Activated CD4-positive, alpha-beta T cell treated with anti-CD3 and anti-CD28 coated beads for 36 hours (primary cell): ENCODE measurements at regions of chr7 and their contacts with region 1.

Region 1: DNA sequence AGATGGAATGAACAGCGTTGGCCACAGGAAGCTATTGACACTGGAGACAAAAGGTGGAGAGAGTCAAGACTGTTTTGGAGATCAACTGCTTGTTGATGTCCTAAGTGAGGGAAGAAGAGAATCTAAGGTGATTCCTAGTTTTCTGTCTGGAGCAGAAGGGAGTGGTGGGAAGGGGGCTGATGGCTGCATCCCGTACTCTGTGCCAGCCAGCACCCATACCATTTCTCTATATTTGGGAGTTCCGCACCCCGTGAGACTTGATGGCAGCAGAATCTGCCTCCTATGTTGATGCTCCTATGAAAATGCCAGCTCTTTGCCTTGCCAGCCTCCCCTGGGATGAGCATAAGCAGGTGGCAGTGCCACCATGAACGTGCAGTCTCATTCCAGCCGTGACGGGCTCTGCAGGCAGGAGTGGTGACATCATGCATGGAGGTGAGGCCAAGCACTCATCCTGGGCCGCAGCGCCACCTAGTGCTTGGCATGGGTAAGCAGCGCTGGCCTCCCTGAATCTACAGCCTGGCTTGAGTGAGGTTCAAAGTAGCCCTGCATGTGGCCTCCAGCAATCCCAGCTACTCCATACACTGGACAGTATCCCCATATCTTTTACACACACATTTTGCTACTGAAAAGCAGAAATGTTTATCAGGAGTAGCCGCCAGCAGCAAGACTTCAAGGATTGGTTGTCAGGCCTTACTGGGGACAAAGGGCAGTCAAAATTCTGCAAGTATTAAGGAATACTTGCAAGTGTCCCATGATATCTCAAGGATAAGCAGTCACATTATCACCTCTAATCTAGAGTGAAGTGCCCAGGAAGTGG is 43.0 kb downstream of the PODXL start:
- DNase-seq: peak; percentile 92
- ATAC-seq: peak; percentile 99
- H3K4me3 Mint-ChIP-seq: no peak overlapping the region
- H3K27ac Mint-ChIP-seq: no peak overlapping the region
- H3K4me1 Mint-ChIP-seq: peaks cover 6% of the 10 kb centered on the region
- H3K27me3 Mint-ChIP-seq: peaks cover 9% of the 10 kb centered on the region

Region 2: DNA sequence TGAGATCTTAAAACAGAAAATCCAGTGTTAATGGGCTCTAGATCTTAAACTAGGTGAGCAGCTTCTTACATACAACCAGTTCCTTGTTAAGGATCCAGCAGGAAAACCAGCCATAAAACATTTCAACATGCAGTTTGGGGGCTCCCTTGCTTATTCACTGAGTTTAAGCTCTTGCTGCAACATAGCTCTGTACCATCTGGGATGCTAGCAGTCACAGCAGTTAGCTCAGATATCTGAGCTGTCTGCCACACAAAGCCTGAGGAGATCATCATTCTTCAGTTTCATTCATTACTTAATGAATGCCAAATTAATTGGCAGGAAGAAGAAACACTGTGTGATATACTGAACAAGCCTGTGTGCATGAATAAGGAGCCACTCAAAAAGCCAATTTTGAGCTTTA is 19.9 kb before region 1 on chr7:
- CTCF ChIA-PET with region 1: interaction called, 14 read pairs
- POLR2A ChIA-PET with region 1: no interaction called
- intact Hi-C with region 1: no loop called
- DNase-seq: no peak
- ATAC-seq: no peak
- H3K4me3 Mint-ChIP-seq: no peak overlapping the region
- H3K27ac Mint-ChIP-seq: no peak overlapping the region
- H3K4me1 Mint-ChIP-seq: no peaks in the 10 kb centered on the region
- H3K27me3 Mint-ChIP-seq: no peaks in the 10 kb centered on the region

Region 3: DNA sequence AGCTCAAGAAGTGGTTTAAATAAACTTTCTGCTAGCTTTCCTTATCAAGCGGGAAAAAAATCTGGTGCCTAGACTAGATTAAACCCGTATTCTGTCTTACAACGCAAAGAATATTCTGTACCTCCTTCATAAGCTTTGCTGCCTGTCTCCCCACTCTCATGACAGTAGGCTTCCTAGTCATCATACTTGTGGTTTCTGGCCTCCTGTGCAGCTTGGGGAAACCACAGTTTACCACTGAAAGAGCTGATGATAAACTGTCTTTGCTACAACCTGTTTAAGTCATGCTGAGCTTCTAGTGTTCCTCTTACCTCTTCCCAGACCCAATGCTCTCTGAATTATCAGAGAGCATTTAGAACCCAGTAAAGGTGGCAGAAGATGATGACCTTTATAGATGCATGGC is 12.0 kb before region 1 on chr7:
- CTCF ChIA-PET with region 1: interaction called, 22 read pairs
- POLR2A ChIA-PET with region 1: no interaction called
- intact Hi-C with region 1: no loop called
- DNase-seq: peak; percentile 74
- ATAC-seq: peak; percentile 93
- H3K4me3 Mint-ChIP-seq: no peak overlapping the region
- H3K27ac Mint-ChIP-seq: no peak overlapping the region
- H3K4me1 Mint-ChIP-seq: peaks cover 41% of the 10 kb centered on the region
- H3K27me3 Mint-ChIP-seq: no peaks in the 10 kb centered on the region

Region 4: DNA sequence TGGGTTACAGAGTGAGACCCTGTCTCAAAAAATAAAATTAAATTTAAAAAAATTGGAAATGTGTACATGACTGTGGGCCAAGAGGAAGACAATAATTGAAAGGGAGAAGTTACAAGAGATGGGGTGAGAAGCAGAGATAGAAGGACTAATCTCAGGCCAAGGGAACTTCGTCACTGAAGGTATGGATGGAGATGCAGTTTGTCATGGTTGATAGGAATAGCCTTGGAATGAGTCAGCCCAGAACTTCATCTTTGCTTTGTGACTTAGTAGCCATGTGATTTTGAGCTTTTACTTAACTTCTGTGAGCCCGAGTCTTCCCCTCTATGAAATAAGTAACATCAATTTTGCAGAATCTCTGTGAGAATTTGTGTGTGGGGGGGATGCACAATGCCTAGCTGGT is 49.5 kb after region 1 on chr7:
- CTCF ChIA-PET with region 1: no interaction called
- POLR2A ChIA-PET with region 1: no interaction called
- intact Hi-C with region 1: no loop called
- DNase-seq: no peak
- ATAC-seq: no peak
- H3K4me3 Mint-ChIP-seq: no peak overlapping the region
- H3K27ac Mint-ChIP-seq: no peak overlapping the region
- H3K4me1 Mint-ChIP-seq: no peaks in the 10 kb centered on the region
- H3K27me3 Mint-ChIP-seq: peaks cover 14% of the 10 kb centered on the region